ENCODE measurements at regions of chr10 and their contacts with region 1.

Region 1: DNA sequence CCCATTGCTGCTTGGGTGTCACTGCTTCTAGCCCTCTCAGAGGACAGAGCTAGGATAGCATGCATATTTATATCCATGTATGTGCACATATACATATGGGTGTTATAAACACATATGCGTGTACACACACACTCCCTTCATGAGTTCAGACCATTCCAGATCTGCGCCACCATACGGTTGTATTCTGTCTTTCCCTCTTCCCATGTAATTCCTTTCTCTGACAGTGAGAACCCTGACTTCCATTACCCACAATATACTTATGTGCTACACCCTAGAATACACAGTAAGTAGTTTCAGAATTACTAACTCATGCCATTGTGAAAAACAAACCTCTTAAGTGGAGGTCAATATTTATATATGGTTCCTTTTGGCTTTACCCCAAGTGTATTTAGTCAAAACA is 116.6 kb upstream of the SAMD8 start:
- DNase-seq: no peak
- ATAC-seq: peak; percentile 73
- H3K4me3 ChIP-seq: no peak overlapping the region
- H3K27ac ChIP-seq: no peak overlapping the region
- H3K4me1 ChIP-seq: no peaks in the 10 kb centered on the region; the same call in 1 of the 2 replicates
- H3K27me3 ChIP-seq: no peaks in the 10 kb centered on the region
- CTCF ChIP-seq: no peak
- POLR2A ChIP-seq: no peak
- RAD21 ChIP-seq: no peak

Region 2: GRCh38 chr10:74875952-74876351 is 118.9 kb before region 1 on chr10:
- CTCF ChIA-PET with region 1: interaction called, 12 read pairs
- POLR2A ChIA-PET with region 1: no interaction called
- dilution Hi-C with region 1: no loop called
- in situ Hi-C with region 1: no loop called
- intact Hi-C with region 1: no loop called
- DNase-seq: peak; percentile 31
- ATAC-seq: peak; percentile 79
- H3K4me3 ChIP-seq: no peak overlapping the region
- H3K27ac ChIP-seq: no peak overlapping the region
- H3K4me1 ChIP-seq: peaks cover 34% of the 10 kb centered on the region
- H3K27me3 ChIP-seq: no peaks in the 10 kb centered on the region
- CTCF ChIP-seq: no peak
- POLR2A ChIP-seq: no peak
- RAD21 ChIP-seq: no peak